Endothelial cell of umbilical vein (primary cell): ENCODE measurements at regions of chr20 and their contacts with region 1.

Region 1: DNA sequence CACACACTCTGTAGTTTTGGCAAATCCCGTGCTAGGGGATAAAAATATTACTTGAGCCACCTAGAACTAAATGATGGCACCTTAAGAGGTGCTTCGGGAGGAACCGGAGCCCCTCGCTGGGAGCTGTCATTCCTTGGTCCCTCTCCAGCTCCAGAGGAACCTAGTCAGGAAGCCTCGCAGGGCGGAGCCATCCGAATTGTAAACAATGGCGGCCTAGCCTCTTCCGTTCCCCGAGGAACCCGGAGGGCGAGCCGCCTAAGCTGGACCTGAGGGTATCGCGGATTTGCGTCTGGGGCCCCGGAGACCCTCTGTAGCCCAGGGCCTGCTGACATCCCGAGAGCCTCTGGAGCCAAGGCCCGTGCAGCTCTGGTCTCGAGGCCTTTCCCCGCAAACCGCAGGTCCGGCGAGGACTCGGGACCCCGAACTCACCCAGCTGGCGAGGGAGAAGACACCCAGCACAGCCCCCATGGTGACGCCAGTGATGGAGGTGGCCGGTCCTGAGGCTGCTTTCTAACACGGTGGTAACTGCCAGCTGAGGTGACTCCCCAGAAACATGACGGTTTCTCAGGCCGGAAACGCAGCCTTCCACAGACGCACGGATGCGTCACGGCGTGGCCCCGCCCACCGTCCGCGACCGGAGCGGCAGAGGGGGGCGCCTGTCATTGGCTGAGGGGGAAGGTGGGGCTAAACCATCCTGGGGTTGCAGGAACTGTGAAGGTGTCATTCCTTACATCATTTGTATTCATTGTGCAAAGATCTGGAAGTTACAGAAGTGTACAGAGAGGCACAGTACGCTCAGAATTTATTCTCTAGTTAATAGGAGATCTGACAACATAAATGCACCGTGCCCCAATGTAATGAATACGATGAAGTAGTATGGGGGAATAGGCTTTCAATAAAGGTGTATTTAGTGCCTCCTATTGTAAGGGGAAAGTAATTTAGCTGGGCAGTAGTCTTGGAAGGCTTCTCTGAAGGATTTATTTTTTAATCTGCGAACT is at the start of gene SERINC3:
- DNase-seq: peak; percentile 96
- H3K4me3 ChIP-seq: peak within 1 kb of the TSS; percentile 25 to 86 (median 78)
- H3K27ac ChIP-seq: peak within 1 kb of the TSS; percentile 90
- H3K4me1 ChIP-seq: peaks cover 33% of the 10 kb centered on the region
- H3K27me3 ChIP-seq: no peaks in the 10 kb centered on the region
- CTCF ChIP-seq: peak in 1 of 2 donors; percentile 0
- POLR2A ChIP-seq: peak; percentile 82
- total RNA-seq, gene SERINC3: 83.7 TPM in 2 replicates

Region 2: GRCh38 chr20:44210422-44211176 is 311.2 kb before region 1 on chr20 and contains the start of gene OSER1:
- CTCF ChIA-PET with region 1: no interaction called
- POLR2A ChIA-PET with region 1: no interaction called
- dilution Hi-C with region 1: no loop called
- intact Hi-C with region 1: loop called (anchors 2 kb)
- DNase-seq: peak; percentile 98
- H3K4me3 ChIP-seq: peak within 1 kb of the TSS; percentile 61 to 84 (median 79)
- H3K27ac ChIP-seq: peak within 1 kb of the TSS; percentile 87
- H3K4me1 ChIP-seq: peaks cover 27% of the 10 kb centered on the region
- H3K27me3 ChIP-seq: no peaks in the 10 kb centered on the region
- CTCF ChIP-seq: no peak
- POLR2A ChIP-seq: peak; percentile 88
- total RNA-seq, gene OSER1: 28.8 and 30.8 TPM in 2 replicates

Region 3: GRCh38 chr20:44475694-44476560 is 45.9 kb before region 1 on chr20 and contains the start of gene TTPAL:
- CTCF ChIA-PET with region 1: no interaction called
- POLR2A ChIA-PET with region 1: no interaction called
- dilution Hi-C with region 1: no loop called
- intact Hi-C with region 1: loop called (anchors 2 kb)
- DNase-seq: peak; percentile 83
- H3K4me3 ChIP-seq: peak within 1 kb of the TSS; percentile 42 to 68 (median 52)
- H3K27ac ChIP-seq: peak within 1 kb of the TSS; percentile 56
- H3K4me1 ChIP-seq: peaks cover 13% of the 10 kb centered on the region
- H3K27me3 ChIP-seq: peaks cover 0 to 4% of the 10 kb centered on the region in 2 experiments
- CTCF ChIP-seq: peak; percentile 4 to 28
- POLR2A ChIP-seq: peak; percentile 91
- total RNA-seq, gene TTPAL: 8.0 and 8.7 TPM in 2 replicates

Region 4: DNA sequence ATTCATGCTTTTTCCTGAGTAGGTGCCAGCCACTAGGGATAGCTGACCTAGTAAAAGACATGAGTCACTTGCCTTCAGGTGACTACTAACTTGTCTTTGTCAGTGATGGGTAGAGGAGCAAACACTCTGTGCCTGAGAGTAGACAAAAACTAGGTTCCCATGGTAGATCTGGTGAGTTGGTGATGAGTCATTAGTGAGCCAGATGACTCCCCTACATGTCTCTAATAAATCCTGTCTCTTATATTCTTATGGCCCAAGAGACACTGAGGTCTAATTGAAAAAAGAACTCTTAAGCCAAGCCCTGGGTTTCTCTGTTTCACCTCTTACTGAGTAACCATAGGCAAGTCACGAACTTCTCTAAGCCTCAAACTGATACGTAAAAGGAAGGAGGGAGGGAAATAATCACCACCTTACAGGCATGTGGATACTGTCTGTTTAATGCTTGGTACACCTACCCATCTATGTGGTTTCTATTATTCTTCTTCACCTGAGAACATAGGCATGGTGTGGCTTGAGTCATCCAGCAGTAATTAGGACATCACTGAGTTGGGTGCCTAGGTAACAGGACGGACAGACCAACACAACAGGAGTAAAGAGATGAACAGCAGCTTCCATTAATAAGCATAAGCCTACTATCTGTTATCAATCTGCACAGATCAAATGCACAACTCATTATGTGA is 25.8 kb before region 1 on chr20:
- CTCF ChIA-PET with region 1: no interaction called
- POLR2A ChIA-PET with region 1: no interaction called
- dilution Hi-C with region 1: no loop called
- intact Hi-C with region 1: no loop called
- DNase-seq: peak; percentile 48
- H3K4me3 ChIP-seq: no peak overlapping the region
- H3K27ac ChIP-seq: peak overlapping the region; percentile 18
- H3K4me1 ChIP-seq: no peaks in the 10 kb centered on the region
- H3K27me3 ChIP-seq: no peaks in the 10 kb centered on the region
- CTCF ChIP-seq: no peak
- POLR2A ChIP-seq: no peak